ENCODE measurements at regions of chr7 and their contacts with region 1.

Region 1: GRCh38 chr7:127114742-127115265 is 137.9 kb downstream of the GRM8 start:
- DNase-seq: no peak
- H3K4me3 ChIP-seq: no peak overlapping the region
- CTCF ChIP-seq: no peak
- POLR2A ChIP-seq: no peak

Region 2: GRCh38 chr7:127057918-127058317 is 56.9 kb before region 1 on chr7:
- intact Hi-C with region 1: no loop called
- DNase-seq: no peak
- H3K4me3 ChIP-seq: no peak overlapping the region
- CTCF ChIP-seq: no peak
- POLR2A ChIP-seq: no peak

Region 3: DNA sequence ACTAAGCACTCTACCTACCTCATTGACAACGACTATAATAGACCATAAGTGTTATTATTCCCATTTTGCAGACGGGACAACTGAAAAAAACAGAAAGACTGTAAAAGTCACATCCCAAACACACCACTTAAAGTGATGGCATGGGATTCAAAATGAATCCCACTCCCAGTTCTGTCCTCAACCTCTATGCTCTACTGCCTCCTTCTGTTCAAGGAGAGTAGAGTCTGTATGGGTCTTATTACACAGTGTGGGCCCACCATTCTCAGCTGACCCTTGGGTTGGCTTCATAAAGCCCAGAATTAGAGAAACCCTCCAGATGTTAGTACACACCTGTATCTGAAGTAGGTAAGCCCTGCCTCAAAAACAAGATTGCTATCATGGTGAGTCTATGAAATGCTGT is 35.7 kb after region 1 on chr7:
- intact Hi-C with region 1: no loop called
- DNase-seq: no peak
- H3K4me3 ChIP-seq: no peak overlapping the region
- CTCF ChIP-seq: no peak
- POLR2A ChIP-seq: no peak

Region 4: DNA sequence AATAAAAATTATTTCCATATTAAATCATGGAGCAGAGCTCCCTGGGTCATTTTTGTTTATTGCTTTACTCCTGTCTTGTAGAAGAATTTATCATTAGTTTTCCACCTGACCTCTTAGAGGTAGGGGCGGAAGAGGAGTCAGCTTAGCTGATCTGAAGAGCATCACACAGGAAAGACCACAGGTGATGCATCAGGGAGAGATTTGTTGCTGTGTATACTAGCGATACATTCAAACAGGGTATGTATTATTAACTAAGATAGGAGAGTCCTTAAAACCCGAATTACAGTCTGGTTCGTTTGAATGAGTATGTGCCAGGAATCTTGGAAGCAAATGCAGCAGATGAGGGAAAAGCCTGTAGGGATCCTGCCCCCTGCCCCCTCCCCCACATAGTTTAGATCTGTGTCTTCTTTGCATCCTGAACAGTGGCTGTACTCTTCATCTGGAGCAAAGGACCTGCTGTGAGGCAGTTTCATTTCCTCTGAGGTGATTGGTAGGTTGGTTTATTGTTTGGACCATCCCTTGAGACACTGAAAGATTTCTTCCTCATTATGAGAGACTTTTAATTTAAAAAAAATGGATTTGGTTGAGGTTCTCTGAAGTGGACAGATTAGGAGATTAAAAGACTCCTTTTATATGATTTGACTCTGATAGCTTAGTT is 714.2 kb after region 1 on chr7:
- intact Hi-C with region 1: loop called (anchors 5 kb)
- DNase-seq: no peak
- H3K4me3 ChIP-seq: no peak overlapping the region
- CTCF ChIP-seq: no peak
- POLR2A ChIP-seq: no peak